ENCODE measurements at regions of chr7 and their contacts with region 1.

Region 1: DNA sequence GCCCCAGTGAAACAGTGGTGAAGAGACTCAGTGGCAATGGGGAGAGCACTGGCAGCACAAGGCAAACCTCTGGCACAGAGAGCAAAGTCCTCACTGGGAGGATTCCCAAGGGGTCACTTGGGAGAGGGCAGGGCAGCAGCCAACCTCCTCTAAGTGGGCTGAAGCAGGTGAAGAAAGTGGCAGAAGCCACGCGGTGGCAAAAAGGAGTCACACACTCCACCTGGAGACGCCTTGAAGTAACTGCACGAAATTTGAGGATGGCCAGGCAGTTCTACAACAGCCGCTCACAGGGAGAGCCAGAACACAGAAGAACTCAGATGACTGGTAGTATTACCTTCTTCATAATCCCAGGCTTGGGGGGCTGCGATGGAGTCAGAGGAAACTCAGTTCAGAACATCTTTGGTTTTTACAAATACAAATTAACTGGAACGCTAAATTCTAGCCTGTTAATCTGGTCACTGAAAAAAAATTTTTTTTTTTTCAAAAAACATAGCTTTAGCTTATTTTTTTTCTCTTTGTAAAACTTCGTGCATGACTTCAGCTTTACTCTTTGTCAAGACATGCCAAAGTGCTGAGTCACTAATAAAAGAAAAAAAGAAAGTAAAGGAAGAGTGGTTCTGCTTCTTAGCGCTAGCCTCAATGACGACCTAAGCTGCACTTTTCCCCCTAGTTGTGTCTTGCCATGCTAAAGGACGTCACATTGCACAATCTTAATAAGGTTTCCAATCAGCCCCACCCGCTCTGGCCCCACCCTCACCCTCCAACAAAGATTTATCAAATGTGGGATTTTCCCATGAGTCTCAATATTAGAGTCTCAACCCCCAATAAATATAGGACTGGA is 435 bp upstream of the IL6 start:
- DNase-seq: peak in 2 of 3 donors; percentile 27 to 60
- ATAC-seq: peak; percentile 69
- H3K4me3 ChIP-seq: no peak overlapping the region
- H3K4me1 ChIP-seq: peaks cover 3% of the 10 kb centered on the region
- CTCF ChIP-seq: no peak

Region 2: GRCh38 chr7:22559829-22560489 is 166.6 kb before region 1 on chr7:
- intact Hi-C with region 1: loop called in 1 of 2 experiments (anchors 5 kb)
- DNase-seq: peak in 2 of 3 donors; percentile 51 to 83
- ATAC-seq: peak; percentile 74
- H3K4me3 ChIP-seq: no peak overlapping the region
- H3K4me1 ChIP-seq: no peaks in the 10 kb centered on the region
- CTCF ChIP-seq: peak; percentile 43

Region 3: DNA sequence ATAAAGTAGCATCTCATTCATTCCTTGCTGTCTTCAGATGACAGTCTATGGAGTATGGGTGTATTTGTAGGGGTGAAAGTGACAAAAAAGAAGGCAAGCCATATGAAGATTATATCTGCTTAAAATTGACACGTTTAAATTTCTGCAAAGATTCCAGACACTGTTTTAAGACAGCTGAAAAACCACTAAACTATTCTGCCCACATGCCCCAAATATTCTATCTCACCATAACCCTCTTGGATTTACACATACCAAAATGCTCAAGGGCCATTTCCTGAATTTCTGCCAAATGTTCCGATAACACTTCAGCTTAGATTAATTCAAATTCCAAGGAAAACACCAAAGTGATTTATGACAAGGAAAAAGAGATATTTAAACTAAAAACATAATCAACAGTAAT is 99.4 kb before region 1 on chr7:
- intact Hi-C with region 1: no loop called
- DNase-seq: no peak
- ATAC-seq: no peak
- H3K4me3 ChIP-seq: no peak overlapping the region
- H3K4me1 ChIP-seq: no peaks in the 10 kb centered on the region
- CTCF ChIP-seq: no peak